K562 (cell line): ENCODE measurements at regions of chr9 and their contacts with region 1.

Region 1: GRCh38 chr9:72280913-72281500 is 84.0 kb downstream of the ZFAND5 start:
- DNase-seq: peak; percentile 54 to 67 (median 59)
- ATAC-seq: peak; percentile 91
- H3K4me3 ChIP-seq: no peak overlapping the region
- H3K27ac ChIP-seq: no peak overlapping the region
- H3K4me1 ChIP-seq: no peaks in the 10 kb centered on the region
- H3K27me3 ChIP-seq: no peaks in the 10 kb centered on the region; a peak in 1 of 5 replicates
- CTCF ChIP-seq: peak; percentile 75 to 86 (median 79)
- EP300 ChIP-seq: no peak
- POLR2A ChIP-seq: no peak
- RAD21 ChIP-seq: peak; percentile 83 to 88

Region 2: DNA sequence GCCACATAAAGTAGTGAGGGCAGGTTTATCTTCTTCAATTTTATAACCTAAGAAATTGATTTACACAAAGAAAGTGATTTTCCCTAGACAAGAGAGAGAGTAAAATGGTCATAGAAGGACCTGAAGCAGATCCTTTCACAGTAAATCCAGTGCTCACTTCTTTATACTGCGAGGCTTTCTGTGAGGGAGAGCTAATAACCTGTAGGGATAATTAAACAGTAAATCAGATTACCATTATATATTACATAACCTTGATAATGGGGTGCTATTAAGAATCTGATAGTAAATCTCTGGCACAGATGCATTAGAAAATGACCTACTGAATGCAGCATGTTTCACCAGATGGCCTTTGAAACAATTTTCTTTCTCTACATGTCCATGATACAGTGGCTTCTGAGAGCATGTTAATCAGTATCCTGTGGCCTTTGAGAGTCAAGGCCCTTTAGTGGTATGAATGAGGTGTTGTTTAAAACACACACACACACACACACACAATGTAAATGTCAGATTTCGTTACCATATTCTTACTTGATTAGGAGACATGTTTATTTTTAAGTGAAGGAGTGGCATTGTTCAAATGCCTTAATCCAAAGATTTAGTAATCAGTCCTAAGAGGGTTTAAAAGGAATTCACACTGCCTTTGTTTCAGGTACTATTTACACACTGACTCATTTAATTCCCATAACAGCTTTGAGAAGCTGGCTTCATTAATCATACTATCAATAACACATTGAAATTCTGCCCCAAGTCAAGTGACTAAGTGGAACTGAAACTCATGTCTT is 547.1 kb after region 1 on chr9:
- CTCF ChIA-PET with region 1: no interaction called
- POLR2A ChIA-PET with region 1: no interaction called
- in situ Hi-C with region 1: loop called (anchors 10 kb)
- intact Hi-C with region 1: loop called (anchors 5 kb)
- DNase-seq: no peak
- ATAC-seq: no peak
- H3K4me3 ChIP-seq: no peak overlapping the region
- H3K27ac ChIP-seq: no peak overlapping the region
- H3K4me1 ChIP-seq: no peaks in the 10 kb centered on the region
- H3K27me3 ChIP-seq: no peaks in the 10 kb centered on the region; a peak in 2 of 5 replicates
- CTCF ChIP-seq: no peak
- EP300 ChIP-seq: no peak
- POLR2A ChIP-seq: no peak
- RAD21 ChIP-seq: no peak

Region 3: GRCh38 chr9:73183917-73184861 is 903.2 kb after region 1 on chr9:
- CTCF ChIA-PET with region 1: interaction called, 3 read pairs
- POLR2A ChIA-PET with region 1: no interaction called
- in situ Hi-C with region 1: loop called (anchors 25 kb)
- intact Hi-C with region 1: loop called (anchors 5 kb)
- DNase-seq: peak in 3 of 4 experiments; percentile 10 to 38 (median 11)
- ATAC-seq: 0 out of 3 replicates have a peak, but pooled peaks have one; percentile 48
- H3K4me3 ChIP-seq: no peak overlapping the region
- H3K27ac ChIP-seq: no peak overlapping the region; the same call in 2 of the 3 replicates
- H3K4me1 ChIP-seq: no peaks in the 10 kb centered on the region
- H3K27me3 ChIP-seq: no peaks in the 10 kb centered on the region
- CTCF ChIP-seq: peak in 2 of 3 experiments; percentile 14 to 57; a peak in 3 of 6 replicates
- EP300 ChIP-seq: no peak
- POLR2A ChIP-seq: no peak
- RAD21 ChIP-seq: peak; percentile 74